HCT116 (cell line): ENCODE measurements at regions of chr6 and their contacts with region 1.

Region 1: DNA sequence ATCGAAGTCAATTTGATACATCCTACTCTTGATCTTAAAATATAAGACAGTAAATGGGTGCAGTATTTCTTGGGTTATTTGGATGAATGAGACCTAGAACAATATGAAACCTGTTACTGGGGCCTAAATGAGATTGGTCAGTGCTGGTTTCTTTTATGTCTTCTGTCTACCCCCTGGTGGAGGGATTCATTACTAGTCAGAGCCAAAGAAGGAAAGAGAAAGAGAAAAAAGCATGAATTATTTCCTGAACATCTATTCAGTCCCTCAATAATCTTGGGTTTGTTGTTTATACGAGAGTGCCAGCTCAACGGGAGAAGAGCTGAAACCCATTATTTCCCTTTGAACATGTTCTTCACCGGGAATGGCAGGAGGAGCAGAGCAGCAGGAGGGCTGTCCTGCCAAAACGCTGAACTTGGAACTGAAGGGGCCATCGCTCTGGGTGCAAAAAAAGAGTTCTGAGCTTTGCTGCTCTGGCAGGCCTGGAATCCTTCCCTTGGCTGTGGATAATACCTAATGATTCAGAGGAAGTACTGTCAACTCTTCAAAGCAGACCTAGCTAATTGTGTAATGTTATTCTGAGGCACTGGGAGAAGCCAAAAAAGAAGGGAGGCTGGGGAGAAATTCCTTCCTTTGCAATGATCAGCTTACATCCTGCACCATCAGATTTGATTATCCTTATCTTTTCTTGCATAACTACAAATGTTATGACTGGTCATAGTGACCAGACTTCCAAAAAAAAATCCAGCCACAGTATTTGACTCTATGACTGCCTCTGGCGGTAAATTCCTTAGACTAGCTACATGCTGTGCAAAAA is 72.0 kb downstream of the BLOC1S5 start:
- DNase-seq: peak; percentile 24
- ATAC-seq: peak; percentile 77
- H3K4me3 ChIP-seq: no peak overlapping the region
- H3K27ac ChIP-seq: no peak overlapping the region
- H3K4me1 ChIP-seq: no peaks in the 10 kb centered on the region
- H3K27me3 ChIP-seq: no peaks in the 10 kb centered on the region
- CTCF ChIP-seq: peak; percentile 46 to 68 (median 61); a peak in 5 of 6 replicates
- POLR2A ChIP-seq: no peak
- RAD21 ChIP-seq: peak; percentile 87

Region 2: DNA sequence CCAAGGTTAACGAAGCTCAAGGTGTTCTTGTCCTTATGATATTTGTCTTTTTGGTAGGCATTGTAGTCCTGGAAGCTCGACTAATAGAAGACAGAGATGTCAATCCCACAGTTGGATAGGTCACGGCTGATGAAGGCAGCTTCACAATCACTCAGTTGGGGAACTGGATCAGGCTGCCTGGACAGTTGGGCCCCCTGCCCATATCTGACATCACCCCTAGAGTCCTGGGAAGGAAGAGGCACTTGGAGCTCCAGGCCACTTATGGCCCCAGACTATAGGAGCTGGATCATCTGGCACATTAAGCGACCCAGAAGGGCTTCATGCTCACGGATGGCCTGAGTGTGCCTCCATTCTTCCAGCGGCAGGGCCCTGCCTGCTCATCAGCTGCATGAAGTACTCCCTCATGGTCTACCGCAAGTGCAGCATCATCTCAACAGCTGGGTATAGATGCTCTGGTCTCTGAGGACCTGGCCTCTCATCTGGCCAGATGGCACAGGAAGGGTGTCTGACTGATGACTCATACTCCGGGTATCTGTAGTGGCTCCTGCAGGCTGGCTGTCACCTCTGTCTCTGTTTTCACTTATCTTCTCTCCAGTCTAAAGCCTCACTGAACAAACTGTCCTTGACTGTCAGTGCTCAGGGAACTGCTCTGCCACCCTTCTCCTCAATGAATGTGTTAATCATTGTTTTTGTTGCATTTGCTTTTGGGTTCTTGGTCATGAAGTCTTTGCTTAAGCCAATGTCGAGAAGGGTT is 650.0 kb before region 1 on chr6:
- CTCF ChIA-PET with region 1: no interaction called
- POLR2A ChIA-PET with region 1: no interaction called
- RAD21 ChIA-PET with region 1: no interaction called
- intact Hi-C with region 1: no loop called
- DNase-seq: peak; percentile 23
- ATAC-seq: peak; percentile 79
- H3K4me3 ChIP-seq: no peak overlapping the region
- H3K27ac ChIP-seq: no peak overlapping the region
- H3K4me1 ChIP-seq: peaks cover 0 to 12% of the 10 kb centered on the region in 2 experiments; a peak in 3 of 4 replicates
- H3K27me3 ChIP-seq: no peaks in the 10 kb centered on the region
- CTCF ChIP-seq: no peak
- POLR2A ChIP-seq: no peak
- RAD21 ChIP-seq: no peak

Region 3: GRCh38 chr6:7624796-7625710 is 367.2 kb before region 1 on chr6:
- CTCF ChIA-PET with region 1: no interaction called
- POLR2A ChIA-PET with region 1: no interaction called
- RAD21 ChIA-PET with region 1: no interaction called
- intact Hi-C with region 1: no loop called
- DNase-seq: no peak
- ATAC-seq: no peak
- H3K4me3 ChIP-seq: no peak overlapping the region
- H3K27ac ChIP-seq: no peak overlapping the region
- H3K4me1 ChIP-seq: no peaks in the 10 kb centered on the region
- H3K27me3 ChIP-seq: no peaks in the 10 kb centered on the region
- CTCF ChIP-seq: peak in 1 of 3 experiments; percentile 10; a peak in 1 of 6 replicates
- POLR2A ChIP-seq: no peak
- RAD21 ChIP-seq: peak; percentile 26; the same call in 1 of the 2 replicates

Region 4: DNA sequence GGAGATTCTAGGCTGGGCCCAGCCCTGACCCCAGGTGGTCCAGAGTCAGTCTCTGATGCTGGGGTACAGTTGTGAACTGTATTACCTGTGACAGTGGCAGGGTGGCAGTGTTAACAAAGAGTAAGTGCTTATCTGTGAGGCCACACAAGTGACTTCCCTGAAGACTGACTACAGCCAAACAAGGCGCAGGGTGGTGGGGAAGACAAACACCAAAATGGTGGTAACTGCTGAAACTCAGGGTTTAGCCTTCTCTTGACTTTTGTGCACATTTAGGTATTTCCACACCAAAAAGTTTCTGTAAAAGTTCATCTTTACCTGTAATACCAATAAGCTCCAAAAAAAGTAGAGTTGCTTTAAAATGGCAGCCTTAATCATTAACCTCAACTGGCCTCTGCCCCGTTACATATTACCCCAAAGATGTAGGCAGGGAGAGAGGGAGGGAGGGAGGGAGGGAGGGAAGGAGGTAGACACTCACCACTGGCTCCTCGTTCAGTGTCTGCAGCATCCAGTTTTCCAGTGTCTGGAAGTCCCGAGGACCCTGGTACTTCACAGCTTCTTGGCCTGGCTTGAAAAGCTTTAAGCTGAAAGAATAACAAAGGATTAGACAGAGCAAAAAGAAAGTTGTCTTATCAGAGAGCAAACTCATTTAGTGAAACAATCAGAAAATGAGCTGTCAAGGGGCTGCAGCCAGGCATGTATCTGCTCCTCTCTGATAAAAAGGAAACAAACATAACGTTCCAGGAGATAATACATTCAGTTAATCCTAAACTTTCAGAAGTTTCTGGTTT is 92.9 kb before region 1 on chr6:
- CTCF ChIA-PET with region 1: interaction called, 3 read pairs
- POLR2A ChIA-PET with region 1: no interaction called
- RAD21 ChIA-PET with region 1: no interaction called
- intact Hi-C with region 1: loop called (anchors 5 kb)
- DNase-seq: no peak
- ATAC-seq: peak; percentile 82
- H3K4me3 ChIP-seq: no peak overlapping the region
- H3K27ac ChIP-seq: no peak overlapping the region
- H3K4me1 ChIP-seq: no peaks in the 10 kb centered on the region
- H3K27me3 ChIP-seq: no peaks in the 10 kb centered on the region
- CTCF ChIP-seq: peak; percentile 27 to 31 (median 27); a peak in 4 of 6 replicates
- POLR2A ChIP-seq: no peak
- RAD21 ChIP-seq: peak; percentile 61

Region 5: DNA sequence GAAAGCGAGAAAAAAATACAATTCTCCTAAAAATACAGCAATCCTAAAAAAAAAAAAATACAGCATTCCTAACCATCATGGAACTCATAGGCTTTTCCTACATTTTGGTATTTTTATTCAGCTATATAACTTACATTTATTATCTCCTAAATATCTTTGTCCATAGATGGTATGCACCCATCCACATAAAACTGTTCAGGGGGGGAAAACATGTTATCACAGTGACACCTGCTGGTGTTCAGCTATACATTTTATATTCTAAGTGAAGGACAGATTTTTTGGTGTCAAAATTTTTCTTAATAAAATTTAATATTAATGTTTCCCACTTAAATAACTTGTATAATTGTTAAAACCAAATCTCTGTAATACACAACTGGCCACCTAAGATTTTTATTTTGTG is 14.0 kb after region 1 on chr6:
- CTCF ChIA-PET with region 1: interaction called, 12 read pairs
- POLR2A ChIA-PET with region 1: no interaction called
- RAD21 ChIA-PET with region 1: no interaction called
- intact Hi-C with region 1: no loop called
- DNase-seq: peak; percentile 27
- ATAC-seq: peak; percentile 60; the same call in 1 of the 2 replicates
- H3K4me3 ChIP-seq: no peak overlapping the region
- H3K27ac ChIP-seq: no peak overlapping the region
- H3K4me1 ChIP-seq: no peaks in the 10 kb centered on the region
- H3K27me3 ChIP-seq: no peaks in the 10 kb centered on the region
- CTCF ChIP-seq: peak; percentile 50 to 68 (median 55); a peak in 5 of 6 replicates
- POLR2A ChIP-seq: no peak
- RAD21 ChIP-seq: peak; percentile 75

Region 6: GRCh38 chr6:8030920-8031319 is 38.7 kb after region 1 on chr6:
- CTCF ChIA-PET with region 1: no interaction called
- POLR2A ChIA-PET with region 1: no interaction called
- RAD21 ChIA-PET with region 1: no interaction called
- intact Hi-C with region 1: no loop called
- DNase-seq: no peak
- ATAC-seq: no peak
- H3K4me3 ChIP-seq: no peak overlapping the region
- H3K27ac ChIP-seq: no peak overlapping the region
- H3K4me1 ChIP-seq: no peaks in the 10 kb centered on the region
- H3K27me3 ChIP-seq: no peaks in the 10 kb centered on the region
- CTCF ChIP-seq: no peak
- POLR2A ChIP-seq: no peak
- RAD21 ChIP-seq: no peak